Activated CD8-positive, alpha-beta T cell treated with anti-CD3 and anti-CD28 coated beads, Interleukin-2, amount 10 ng/mL, durations not matched to agents 7 days and 5 days (primary cell): ENCODE measurements at regions of chr22 and their contacts with region 1.

Region 1: GRCh38 chr22:37862570-37863325 is 13.5 kb downstream of the EIF3L start:
- DNase-seq: no peak
- ATAC-seq: no peak
- H3K4me3 Mint-ChIP-seq: no peak overlapping the region
- H3K27ac Mint-ChIP-seq: no peak overlapping the region
- H3K4me1 Mint-ChIP-seq: peaks cover 3% of the 10 kb centered on the region
- H3K27me3 Mint-ChIP-seq: no peaks in the 10 kb centered on the region

Region 2: DNA sequence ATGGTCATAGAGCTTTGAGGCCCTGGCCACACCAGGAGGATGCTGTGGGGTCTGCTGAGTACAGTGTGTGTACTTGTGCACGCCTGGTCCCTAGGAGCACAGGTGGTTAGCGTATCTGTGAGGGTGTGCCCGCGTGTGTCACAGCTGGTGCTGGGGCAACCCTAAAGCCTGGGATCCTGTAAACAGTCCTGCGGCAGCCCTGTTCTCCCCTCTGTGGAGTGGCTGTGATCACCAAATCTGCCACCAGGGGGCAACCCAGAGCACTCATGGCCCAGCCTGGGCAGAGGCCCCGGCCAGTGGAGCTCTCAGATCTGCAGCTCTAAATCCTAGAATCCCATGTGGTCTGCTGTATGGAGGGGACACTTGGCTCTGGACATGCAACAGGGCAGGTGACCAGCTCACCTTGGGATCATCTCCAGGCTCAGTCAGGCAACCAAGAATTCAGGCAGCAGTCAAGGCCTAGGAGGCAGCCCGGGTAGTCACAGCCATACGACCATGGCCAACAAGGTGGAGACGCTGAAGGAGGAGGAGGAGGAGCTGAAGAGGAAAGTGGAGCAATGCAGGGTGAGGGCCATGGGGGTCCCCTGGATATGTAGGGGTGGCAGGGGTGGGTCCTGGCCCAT is 219.4 kb before region 1 on chr22:
- CTCF ChIA-PET with region 1: interaction called, 10 read pairs
- POLR2A ChIA-PET with region 1: no interaction called
- DNase-seq: peak; percentile 91
- ATAC-seq: peak; percentile 61
- H3K4me3 Mint-ChIP-seq: peak overlapping the region; percentile 63
- H3K27ac Mint-ChIP-seq: peak overlapping the region; percentile 72
- H3K4me1 Mint-ChIP-seq: peaks cover 47% of the 10 kb centered on the region
- H3K27me3 Mint-ChIP-seq: no peaks in the 10 kb centered on the region

Region 3: DNA sequence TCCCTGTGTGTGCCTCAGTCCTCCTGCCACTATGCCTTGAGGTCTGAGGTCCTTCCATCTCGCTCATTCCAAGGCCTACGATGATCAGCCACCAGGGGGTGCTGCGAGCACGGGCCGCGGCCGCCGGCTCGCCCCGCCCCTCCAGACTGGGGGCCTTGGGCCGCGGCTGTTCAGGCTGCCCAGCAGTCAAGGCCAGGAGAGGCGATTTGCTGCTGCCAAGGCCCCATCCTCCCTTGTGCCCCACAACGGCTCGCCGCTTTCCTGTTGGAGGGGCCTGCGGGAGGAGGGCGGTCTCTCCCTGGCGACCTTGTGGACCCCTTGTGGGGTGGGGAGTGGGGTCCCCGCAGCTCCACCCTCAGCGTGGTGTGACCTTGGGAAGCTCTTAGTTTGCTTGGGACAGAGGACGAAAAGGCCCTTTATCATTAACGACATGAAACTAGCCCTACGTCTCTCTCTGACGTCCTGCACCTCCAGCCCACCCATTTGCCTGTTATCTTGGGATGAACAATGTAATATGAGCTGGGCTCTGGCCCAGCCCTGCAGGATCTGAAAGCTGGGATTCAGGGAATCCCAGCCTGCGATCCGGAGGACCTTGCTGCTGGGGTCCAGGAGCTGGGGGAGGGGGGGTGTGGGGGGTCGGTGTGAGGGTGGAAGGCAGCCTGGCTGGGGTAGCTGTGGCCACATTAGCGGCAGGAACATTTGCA is 44.9 kb before region 1 on chr22:
- CTCF ChIA-PET with region 1: interaction called, 111 read pairs
- POLR2A ChIA-PET with region 1: no interaction called
- DNase-seq: peak; percentile 81
- ATAC-seq: peak; percentile 83
- H3K4me3 Mint-ChIP-seq: peak overlapping the region; percentile 18
- H3K27ac Mint-ChIP-seq: no peak overlapping the region
- H3K4me1 Mint-ChIP-seq: peaks cover 17% of the 10 kb centered on the region
- H3K27me3 Mint-ChIP-seq: peaks cover 25% of the 10 kb centered on the region

Region 4: DNA sequence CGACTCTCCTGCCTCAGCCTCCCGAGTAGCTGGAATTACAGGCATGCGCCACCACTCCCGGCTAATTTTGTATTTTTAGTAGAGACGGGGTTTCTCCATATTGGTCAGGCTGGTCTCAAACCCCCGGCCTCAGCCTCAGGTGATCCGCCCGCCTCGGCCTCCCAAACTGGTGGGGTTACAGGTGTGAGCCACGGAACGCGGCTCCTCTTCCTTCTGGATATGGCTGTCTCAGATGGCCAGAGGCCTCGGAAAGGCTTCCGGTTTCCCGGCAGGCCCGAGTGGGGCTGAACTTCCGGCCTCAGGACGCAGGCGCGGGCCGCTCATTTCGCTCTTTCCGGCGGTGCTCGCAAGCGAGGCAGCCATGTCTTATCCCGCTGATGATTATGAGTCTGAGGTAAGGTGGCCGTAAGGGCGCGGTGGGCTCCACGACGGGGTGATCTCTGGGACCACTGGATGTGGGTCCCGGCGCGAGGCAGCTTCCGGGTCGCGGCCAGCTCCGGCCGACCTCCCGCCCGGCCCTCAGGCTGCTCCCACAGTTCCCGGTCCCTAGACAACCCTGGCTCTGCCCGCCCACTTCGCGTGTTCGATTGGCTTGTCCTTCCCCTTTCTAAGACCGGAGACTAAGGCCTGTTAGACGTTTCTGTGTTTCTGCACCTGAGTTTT is 13.5 kb before region 1 on chr22 and contains the start of gene EIF3L:
- CTCF ChIA-PET with region 1: interaction called, 31 read pairs
- POLR2A ChIA-PET with region 1: interaction called, 6 read pairs
- DNase-seq: peak; percentile 93
- ATAC-seq: peak; percentile 80
- H3K4me3 Mint-ChIP-seq: peak within 1 kb of the TSS; percentile 89
- H3K27ac Mint-ChIP-seq: peak within 1 kb of the TSS; percentile 96
- H3K4me1 Mint-ChIP-seq: peaks cover 51% of the 10 kb centered on the region
- H3K27me3 Mint-ChIP-seq: no peaks in the 10 kb centered on the region
- total RNA-seq, gene EIF3L: 391 to 410 TPM

Region 5: GRCh38 chr22:37887610-37888378 is 25.0 kb after region 1 on chr22:
- CTCF ChIA-PET with region 1: interaction called, 12 read pairs
- POLR2A ChIA-PET with region 1: no interaction called
- DNase-seq: no peak
- ATAC-seq: no peak
- H3K4me3 Mint-ChIP-seq: no peak overlapping the region
- H3K27ac Mint-ChIP-seq: peak overlapping the region; percentile 2
- H3K4me1 Mint-ChIP-seq: peaks cover 8% of the 10 kb centered on the region
- H3K27me3 Mint-ChIP-seq: no peaks in the 10 kb centered on the region

Region 6: DNA sequence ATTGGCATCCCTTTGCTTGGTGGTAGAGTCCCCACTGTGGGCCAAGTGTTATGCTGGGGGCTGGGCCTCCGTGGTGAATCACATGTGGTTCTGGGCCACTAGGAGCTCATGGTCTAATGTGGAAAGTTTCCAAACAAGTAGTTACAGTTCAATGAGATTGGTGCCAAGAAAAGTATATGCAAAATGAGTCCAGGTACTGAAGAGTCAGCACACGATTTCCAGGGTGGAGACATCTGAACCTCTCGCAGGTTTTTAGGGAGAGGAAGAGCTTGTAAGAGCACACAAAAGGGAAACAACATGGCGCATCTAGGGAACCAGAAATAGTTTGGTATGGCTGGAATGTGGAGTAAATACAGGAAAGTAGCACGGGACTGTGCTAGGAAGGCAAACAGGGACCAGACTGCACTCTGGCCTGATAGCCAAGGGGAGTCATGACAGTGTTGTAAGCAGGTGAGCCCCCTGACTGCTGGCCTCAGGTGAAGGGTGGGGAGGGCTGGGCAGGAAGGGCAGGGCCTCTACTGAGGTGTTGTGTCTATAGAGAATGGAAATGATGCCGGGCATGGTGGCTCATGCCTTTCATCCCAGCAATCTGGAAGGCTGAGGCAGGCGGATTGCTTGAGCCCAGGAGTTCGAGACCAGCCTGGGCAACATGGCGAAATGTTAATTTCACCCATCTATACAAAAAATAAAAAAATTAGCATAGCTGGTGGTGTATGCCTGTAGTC is 103.4 kb after region 1 on chr22:
- CTCF ChIA-PET with region 1: interaction called, 15 read pairs
- POLR2A ChIA-PET with region 1: no interaction called
- DNase-seq: no peak
- ATAC-seq: no peak
- H3K4me3 Mint-ChIP-seq: no peak overlapping the region
- H3K27ac Mint-ChIP-seq: no peak overlapping the region
- H3K4me1 Mint-ChIP-seq: peaks cover 4% of the 10 kb centered on the region
- H3K27me3 Mint-ChIP-seq: no peaks in the 10 kb centered on the region